Right cardiac atrium (tissue), 5 donors: ENCODE measurements at regions of chr17 and their contacts with region 1.

Region 1: DNA sequence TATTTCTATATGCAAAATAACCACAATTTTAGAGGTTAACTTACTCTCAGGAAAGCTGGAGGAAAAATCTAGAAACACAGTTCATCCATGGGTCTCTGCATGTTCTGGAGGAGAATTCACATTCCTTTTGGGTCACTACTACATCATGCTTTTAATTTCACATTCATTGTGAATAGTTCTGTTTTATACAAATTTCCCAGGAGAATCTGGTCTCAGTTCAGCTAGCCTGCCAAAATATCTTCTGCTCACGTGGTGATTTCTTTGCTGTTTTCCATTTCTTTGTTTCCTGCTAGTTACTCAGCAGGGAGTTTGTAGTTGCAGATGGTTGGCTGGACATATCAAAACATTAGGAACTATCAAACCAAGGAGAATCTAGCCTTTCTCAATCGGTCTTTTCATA is at the start of gene ABCA9:
- DNase-seq: no peak
- ATAC-seq: peak; percentile 89 to 90
- H3K4me3 ChIP-seq: peak within 1 kb of the TSS; percentile 46
- H3K27ac ChIP-seq: peak within 1 kb of the TSS; percentile 80
- H3K4me1 ChIP-seq: no peaks in the 10 kb centered on the region
- H3K27me3 ChIP-seq: no peaks in the 10 kb centered on the region
- total RNA-seq, gene ABCA9: 14.5 to 28.7 (median 26.3) TPM

Region 2: DNA sequence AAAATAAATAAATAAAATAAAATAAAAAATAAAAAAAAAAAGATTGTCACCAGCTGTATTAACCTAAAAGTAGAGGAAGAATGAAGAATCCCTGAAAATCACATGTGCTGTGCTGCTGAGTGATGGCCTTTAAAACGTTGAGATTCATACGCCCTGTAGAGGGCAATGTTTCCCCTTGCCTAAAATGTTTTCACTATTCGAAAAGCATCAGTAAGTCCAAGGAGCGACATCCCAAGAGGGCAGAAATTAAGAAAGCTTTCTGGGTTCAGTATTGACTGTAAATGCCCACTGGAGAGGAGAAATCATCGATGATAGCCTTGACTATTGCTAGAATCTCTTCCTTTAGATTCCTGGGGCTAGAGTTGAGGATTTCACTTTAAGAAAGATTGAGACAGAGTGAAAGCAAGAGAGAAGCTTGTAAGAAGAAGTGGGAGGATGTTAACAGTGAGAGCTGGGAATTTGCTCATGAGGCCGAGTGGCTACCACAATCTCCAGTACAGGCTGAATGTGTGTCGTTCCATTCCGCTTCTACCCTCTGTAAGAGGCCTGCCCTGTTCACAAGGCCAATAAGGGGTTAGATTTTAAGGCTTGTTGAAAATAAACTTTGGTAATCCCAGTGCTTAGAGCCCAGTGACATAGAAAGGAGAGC is 288.8 kb before region 1 on chr17:
- intact Hi-C with region 1: loop called in 1 of 4 experiments (anchors 10 kb)
- DNase-seq: no peak
- ATAC-seq: peak; percentile 82 to 85
- H3K4me3 ChIP-seq: no peak overlapping the region
- H3K27ac ChIP-seq: peak overlapping the region; percentile 30
- H3K4me1 ChIP-seq: no peaks in the 10 kb centered on the region
- H3K27me3 ChIP-seq: no peaks in the 10 kb centered on the region

Region 3: DNA sequence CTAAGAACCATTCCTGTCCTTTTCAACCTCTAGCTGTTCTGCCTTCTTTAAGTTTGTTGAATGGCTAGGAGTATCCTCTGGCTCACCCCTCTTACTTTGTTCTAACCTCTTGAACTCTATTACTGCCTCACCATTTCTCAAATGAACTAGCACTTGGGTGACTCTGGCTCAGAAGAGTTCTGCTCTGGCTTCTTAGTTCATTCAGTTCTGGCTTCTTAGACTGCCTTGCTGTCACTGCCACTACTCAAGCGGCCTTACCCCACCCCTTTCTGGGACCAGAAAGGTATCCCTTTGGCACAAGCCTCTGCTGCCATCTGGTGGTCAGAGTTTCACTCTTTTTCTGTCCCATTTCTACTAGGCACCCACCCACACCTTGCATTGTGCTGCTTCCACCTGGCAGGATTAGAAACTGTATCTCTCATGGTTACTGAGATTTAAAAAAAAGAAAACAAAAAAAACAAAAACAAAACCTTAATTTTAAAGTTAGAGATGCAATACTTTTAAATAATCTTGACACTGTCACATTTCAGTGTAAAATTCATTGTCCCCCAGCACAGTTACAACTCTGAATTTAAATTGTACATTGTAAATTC is 174.6 kb after region 1 on chr17:
- intact Hi-C with region 1: loop called in 2 of 4 experiments (anchors 10 kb)
- DNase-seq: peak; percentile 84 to 88 (median 88)
- ATAC-seq: peak; percentile 94 to 96
- H3K4me3 ChIP-seq: no peak overlapping the region
- H3K27ac ChIP-seq: no peak overlapping the region
- H3K4me1 ChIP-seq: peaks cover 2% of the 10 kb centered on the region
- H3K27me3 ChIP-seq: no peaks in the 10 kb centered on the region